Head of caudate nucleus (tissue), 42 donors: ENCODE measurements at regions of chr10 and their contacts with region 1.

Region 1: DNA sequence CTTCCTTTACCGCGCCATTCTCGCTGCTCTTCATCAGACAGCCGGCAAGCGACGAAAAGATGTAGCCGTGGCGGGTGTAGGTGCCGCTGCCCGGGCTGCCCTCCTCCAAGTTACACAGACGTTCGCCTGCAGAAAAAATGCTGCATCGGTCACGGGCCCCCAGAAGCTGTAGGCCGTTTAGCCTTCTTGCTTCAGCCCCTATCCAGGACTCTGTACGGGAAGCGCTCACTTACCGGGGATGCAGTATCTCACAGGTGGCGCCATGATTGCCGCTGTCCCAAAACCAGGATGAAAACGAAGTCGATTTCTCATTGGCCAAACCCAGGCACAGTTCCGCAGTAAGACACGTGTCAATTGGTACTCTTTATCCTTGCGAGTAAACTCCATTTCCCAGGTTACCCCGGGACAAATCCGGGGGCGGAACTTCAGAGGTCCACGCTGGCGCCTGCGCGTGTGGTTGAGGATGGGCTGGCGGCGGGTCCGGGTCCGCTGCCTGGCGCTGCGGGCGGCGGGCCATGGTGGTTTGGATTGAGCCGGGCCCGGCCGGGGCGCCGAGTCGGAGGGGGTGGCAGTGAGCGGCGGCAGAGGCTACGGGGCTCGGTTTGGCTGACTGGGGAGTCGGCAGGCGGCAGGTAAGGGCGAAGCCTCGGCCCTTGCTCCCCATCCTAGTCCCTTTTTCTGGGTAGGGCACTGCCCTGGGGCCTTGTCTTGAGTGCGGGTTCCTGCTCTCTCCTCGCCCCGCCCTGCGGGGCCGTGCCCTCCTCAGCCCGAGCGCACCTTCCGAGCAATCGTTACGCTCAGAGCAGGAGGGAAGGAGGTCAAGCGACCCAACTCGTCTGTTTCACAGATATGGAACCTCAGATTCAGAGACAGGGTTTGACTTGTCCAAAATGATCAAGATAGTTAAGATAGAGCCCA is at the starts of genes EXOSC1 and ZDHHC16:
- DNase-seq: peak; percentile 89 to 98 (median 96)

Region 2: DNA sequence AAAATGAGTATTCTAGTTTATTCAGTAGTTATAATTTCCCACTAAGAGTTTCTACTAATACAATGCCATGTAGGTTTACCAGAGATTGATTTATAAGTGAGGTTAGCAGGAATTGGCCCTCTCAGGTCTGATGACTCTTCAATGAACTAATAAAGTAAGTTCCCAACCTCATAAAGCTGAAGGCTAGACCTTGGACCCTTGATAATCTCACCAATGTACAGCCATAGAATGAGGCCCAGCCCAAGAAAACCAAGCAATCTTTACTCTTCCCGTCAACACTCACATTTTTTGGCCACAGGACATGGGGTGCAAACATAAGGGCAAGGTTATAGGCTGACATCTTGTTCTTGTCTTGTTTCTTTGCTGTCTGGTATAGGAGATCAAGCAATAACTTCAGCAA is 186.9 kb before region 1 on chr10:
- intact Hi-C with region 1: no loop called
- DNase-seq: no peak

Region 3: DNA sequence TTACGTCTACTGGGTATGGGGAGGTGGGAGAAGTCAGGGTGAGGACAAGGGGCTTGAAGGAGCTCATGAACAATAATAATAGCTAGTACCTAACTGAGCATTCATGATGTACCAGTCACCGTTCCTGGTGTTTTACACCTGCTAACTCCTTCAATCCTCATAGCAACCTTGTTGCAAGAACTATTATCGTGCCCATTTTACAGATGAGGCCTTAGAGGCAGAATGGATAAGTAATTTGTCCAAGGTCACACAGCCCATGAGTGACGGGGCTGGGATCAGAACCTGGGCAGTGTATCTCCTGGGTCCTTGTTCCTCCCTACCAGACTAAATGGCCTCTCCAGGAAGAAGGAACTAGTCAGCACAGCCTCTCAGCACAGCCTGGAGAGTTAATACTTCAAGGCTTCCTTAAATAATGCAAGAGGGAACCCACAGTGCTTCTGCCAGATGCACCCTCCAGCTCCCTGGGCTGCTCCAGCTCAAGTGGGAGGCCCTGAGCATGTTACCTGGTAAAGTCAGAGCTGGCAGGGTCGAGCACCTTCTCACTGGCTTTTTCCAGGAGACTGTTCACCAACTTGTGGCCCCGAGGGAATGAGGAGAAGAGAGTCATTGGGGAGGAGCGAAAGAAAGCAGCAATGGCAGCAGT is 73.6 kb before region 1 on chr10:
- intact Hi-C with region 1: no loop called
- DNase-seq: no peak

Region 4: DNA sequence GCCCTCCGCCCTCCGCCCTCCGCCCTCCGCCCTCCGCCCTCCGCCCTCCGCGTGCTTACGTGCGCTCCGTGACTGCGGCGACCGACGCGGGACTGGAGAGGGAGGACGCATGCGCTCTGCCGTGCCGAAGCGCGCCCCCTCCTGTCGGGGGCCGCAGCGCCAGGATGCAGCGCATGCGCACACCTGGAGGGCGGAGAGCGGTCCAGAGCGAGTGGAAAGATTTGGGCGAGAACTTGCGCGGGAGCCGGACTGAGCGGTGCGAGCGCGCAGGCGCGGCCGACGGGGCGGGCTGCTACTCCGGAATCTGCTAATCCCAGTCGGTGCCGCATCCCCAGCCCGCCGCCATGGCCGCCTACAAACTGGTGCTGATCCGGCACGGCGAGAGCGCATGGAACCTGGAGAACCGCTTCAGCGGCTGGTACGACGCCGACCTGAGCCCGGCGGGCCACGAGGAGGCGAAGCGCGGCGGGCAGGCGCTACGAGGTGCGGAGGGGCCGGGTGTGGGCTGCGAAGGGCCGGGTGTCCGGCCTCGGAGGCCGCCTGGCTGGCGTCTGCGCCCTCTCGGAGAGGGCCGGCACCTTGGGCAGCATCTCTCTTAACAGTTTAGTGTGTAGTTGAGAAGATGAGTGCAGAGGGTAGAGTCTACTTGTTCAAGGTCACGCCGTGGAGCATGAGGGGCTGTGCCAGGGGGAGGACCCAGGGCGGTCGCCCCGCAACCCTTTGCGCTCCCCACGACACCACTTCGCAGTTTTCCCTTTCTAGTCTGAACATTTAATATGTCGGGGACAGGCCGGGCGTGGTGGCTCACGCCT is 19.8 kb before region 1 on chr10 and contains the start of gene PGAM1:
- intact Hi-C with region 1: loop called (anchors 2 kb)
- DNase-seq: peak; percentile 88 to 99 (median 96)

Region 5: GRCh38 chr10:97640174-97640867 is 194.3 kb after region 1 on chr10 and contains the start of gene PI4K2A:
- intact Hi-C with region 1: no loop called
- DNase-seq: peak; percentile 98 to 100 (median 99)